Sigmoid colon (tissue), 7 donors: ENCODE measurements at regions of chr12 and their contacts with region 1.

Region 1: GRCh38 chr12:57088459-57089248 is at the start of gene NAB2:
- DNase-seq: peak; percentile 99
- H3K4me3 ChIP-seq: peak within 1 kb of the TSS; percentile 75 to 96 (median 88)
- H3K27ac ChIP-seq: peak within 1 kb of the TSS; percentile 97 to 100 (median 99)
- H3K4me1 ChIP-seq: peaks cover 0 to 62% (median 51%) of the 10 kb centered on the region in 4 donors
- H3K27me3 ChIP-seq: no peaks in the 10 kb centered on the region
- CTCF ChIP-seq: no peak
- EP300 ChIP-seq: peak in 2 of 4 donors; percentile 53 to 60
- POLR2A ChIP-seq: peak; percentile 79 to 86
- total RNA-seq, gene NAB2: 24.8 to 28.9 (median 27.4) TPM

Region 2: DNA sequence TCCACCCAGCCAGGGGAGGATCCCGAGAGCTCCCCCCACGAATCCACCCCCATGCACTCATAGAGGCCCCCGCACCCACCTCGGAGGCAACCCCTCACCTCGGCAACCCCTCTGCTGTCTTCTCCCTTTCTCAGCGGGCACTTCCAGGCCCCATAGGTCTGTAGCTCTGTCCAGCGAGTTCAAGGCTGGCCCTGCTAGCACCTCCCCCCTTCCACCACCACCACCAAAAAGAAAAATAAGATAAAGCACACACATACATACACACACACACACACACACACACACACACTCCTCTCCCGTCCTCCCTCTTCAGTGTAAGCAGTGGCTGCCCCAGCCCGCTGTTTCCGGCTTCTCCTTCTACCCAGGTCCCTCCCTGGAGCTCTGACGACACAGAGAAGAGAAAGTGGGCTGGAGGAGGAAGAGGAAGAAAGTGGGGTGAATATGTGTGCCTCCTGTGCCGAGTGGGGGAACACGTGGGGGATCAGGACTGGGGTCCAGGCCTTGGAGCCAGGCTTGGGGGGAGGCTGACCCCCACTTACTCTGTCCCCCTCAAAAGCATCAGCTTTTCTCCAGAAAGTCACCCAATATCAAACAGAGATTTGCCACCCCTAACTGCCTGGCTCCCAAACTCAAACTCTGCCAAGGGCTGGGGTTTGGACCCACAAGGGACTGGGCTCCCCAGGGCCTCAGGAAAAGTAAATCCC is 22.5 kb after region 1 on chr12 and contains the start of gene STAT6:
- intact Hi-C with region 1: loop called (anchors 1 kb)
- DNase-seq: peak; percentile 94
- H3K4me3 ChIP-seq: peak within 1 kb of the TSS; percentile 59 to 83 (median 68)
- H3K27ac ChIP-seq: peak within 1 kb of the TSS; percentile 94 to 99 (median 98)
- H3K4me1 ChIP-seq: peaks cover 0 to 52% (median 47%) of the 10 kb centered on the region in 4 donors
- H3K27me3 ChIP-seq: no peaks in the 10 kb centered on the region
- CTCF ChIP-seq: peak in 1 of 4 experiments; percentile 15
- EP300 ChIP-seq: no peak
- POLR2A ChIP-seq: peak; percentile 62 to 70
- total RNA-seq, gene STAT6: 105 to 163 (median 113) TPM

Region 3: GRCh38 chr12:57611108-57611809 is 522.6 kb after region 1 on chr12 and contains the start of gene ARHGEF25:
- intact Hi-C with region 1: loop called (anchors 2 kb)
- DNase-seq: peak; percentile 93
- H3K4me3 ChIP-seq: peak within 1 kb of the TSS; percentile 67 to 95 (median 86)
- H3K27ac ChIP-seq: peak within 1 kb of the TSS; percentile 96 to 97 (median 96)
- H3K4me1 ChIP-seq: peaks cover 0 to 76% (median 67%) of the 10 kb centered on the region in 4 donors
- H3K27me3 ChIP-seq: no peaks in the 10 kb centered on the region
- CTCF ChIP-seq: no peak
- EP300 ChIP-seq: no peak
- POLR2A ChIP-seq: peak; percentile 63 to 64
- total RNA-seq, gene ARHGEF25: 99.4 to 140 (median 113) TPM